Psoas muscle (tissue), 8 donors: ENCODE measurements at regions of chr17 and their contacts with region 1.

Region 1: DNA sequence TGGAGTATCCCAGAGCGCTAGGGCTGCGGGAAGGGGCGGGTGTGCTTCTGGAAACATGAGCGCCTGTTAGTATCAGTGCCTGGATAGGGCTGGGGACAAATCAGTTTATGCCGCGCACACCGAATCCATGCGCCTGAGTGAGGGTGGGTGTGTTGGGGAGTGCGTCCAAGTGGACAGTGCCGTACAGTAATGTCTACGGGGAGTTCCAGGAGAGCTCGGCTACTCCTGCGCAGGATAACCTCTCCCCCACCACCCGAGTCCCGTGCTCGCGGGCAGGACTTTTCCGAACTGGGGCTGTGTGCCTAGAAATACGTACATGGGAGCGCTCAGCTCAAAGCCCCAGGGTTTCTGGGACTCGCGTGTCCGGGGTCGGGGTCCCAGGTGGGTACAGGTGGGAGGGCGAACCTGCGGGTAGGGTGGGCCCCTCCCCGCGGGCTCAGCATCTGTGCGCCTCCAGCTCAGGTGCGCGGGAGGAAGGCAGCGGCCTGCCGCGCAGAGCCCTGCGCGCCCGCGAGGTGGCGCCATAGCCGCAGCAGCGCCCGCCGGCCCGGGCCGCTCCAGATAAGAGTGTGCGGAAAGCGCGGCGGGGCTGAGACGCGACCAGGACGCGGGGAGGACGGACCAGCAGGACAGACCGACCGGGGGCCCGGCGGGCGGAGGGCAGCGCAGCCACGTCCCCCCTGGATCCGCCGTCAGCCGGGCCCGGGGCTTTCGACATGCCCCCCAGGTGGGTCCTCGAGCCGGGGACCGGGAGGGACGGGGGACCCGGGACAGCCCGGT is at the start of gene HIC1:
- DNase-seq: peak; percentile 81 to 90
- ATAC-seq: peak; percentile 72 to 83 (median 78)
- H3K4me3 ChIP-seq: peak within 1 kb of the TSS; percentile 74
- H3K27ac ChIP-seq: peak within 1 kb of the TSS; percentile 62
- H3K4me1 ChIP-seq: peaks cover 6% of the 10 kb centered on the region
- H3K27me3 ChIP-seq: peaks cover 0 to 13% (median 2%) of the 10 kb centered on the region in 3 donors
- CTCF ChIP-seq: peak; percentile 97
- total RNA-seq, gene HIC1: 4.3 to 12.6 (median 9.4) TPM

Region 2: GRCh38 chr17:2172077-2172851 is 117.6 kb after region 1 on chr17:
- intact Hi-C with region 1: no loop called
- DNase-seq: peak; percentile 65 to 78
- ATAC-seq: peak; percentile 64 to 80 (median 76)
- H3K4me3 ChIP-seq: peak overlapping the region; percentile 37
- H3K27ac ChIP-seq: peak overlapping the region; percentile 84
- H3K4me1 ChIP-seq: peaks cover 64% of the 10 kb centered on the region
- H3K27me3 ChIP-seq: no peaks in the 10 kb centered on the region
- CTCF ChIP-seq: no peak

Region 3: GRCh38 chr17:2244545-2245525 is 190.1 kb after region 1 on chr17:
- intact Hi-C with region 1: loop called (anchors 1 to 2 kb)
- DNase-seq: peak; percentile 89 to 95
- ATAC-seq: peak; percentile 91 to 95 (median 94)
- H3K4me3 ChIP-seq: no peak overlapping the region
- H3K27ac ChIP-seq: peak overlapping the region; percentile 71
- H3K4me1 ChIP-seq: peaks cover 8% of the 10 kb centered on the region
- H3K27me3 ChIP-seq: no peaks in the 10 kb centered on the region
- CTCF ChIP-seq: peak; percentile 99

Region 4: DNA sequence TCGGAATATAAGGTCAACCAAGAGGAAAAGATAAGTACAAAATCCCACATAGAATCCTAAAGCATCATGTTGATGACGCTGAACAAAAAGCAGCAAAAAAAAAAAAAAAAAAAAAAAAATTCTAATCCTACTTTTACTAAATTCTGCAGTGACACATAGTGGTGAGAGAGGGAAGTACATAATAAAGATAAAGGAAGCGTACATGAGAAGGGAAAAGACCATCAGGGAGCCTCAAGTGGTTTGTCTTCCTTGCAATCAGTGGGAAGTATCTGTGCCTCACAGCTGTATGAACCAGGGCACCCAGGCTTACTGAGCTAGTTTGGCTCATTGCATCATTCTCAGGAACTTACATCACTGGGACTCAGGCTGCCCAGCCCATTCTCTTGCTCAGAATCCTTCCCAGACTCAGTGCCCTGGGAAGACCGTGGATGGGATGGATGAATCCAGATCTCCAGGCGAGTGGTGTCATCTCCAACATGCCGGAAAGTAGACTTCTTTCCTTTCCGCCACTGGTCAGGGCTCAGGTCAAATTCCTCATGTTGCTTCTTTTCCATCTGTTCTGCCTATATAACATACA is 227.7 kb after region 1 on chr17:
- intact Hi-C with region 1: loop called in 1 of 2 experiments (anchors 2 kb)
- DNase-seq: peak in 1 of 2 donors; percentile 59
- ATAC-seq: peak; percentile 34 to 70 (median 66)
- H3K4me3 ChIP-seq: no peak overlapping the region
- H3K27ac ChIP-seq: no peak overlapping the region
- H3K4me1 ChIP-seq: no peaks in the 10 kb centered on the region
- H3K27me3 ChIP-seq: no peaks in the 10 kb centered on the region
- CTCF ChIP-seq: peak; percentile 55

Region 5: DNA sequence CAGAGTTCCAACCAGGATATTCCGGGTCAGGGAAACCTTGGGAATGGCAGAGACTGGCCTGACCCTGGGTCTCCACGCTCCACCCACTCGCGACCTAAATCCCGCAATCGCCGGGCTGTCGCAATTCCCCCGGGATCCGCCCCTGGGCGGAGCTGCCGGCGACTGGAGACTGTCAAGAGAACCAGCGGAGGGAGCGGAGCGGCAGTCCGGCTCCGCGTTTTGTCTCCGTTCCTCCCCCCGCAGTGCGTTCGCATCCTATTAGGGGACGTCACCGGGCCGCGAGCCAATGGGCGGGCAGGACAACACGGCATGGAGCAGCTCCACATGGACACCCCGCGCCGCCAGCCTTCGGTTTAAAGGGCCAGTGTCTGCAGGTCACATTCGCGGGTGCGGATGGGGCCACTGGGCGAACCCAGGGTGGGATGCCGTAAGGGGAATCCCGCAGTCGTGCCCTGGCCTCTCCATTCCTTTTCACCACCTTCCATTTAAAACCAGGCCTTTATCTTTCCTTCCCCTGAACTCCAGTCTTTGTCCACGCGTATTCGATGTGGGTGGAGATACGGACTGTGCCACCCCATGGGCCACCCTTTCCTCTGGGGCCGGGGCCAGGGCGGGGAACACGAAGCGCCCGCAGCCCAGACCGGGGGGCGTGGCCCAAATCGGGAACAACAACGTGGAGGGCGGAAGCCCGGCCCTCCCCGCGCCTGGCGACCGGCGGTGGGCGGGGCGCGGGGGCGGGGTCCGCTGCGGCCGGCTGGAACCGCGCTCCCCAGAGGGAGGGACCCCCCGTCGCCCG is 346.9 kb after region 1 on chr17:
- intact Hi-C with region 1: no loop called
- DNase-seq: peak; percentile 100
- ATAC-seq: peak; percentile 67 to 71 (median 68)
- H3K4me3 ChIP-seq: peak overlapping the region; percentile 98
- H3K27ac ChIP-seq: peak overlapping the region; percentile 100
- H3K4me1 ChIP-seq: peaks cover 58% of the 10 kb centered on the region
- H3K27me3 ChIP-seq: no peaks in the 10 kb centered on the region
- CTCF ChIP-seq: no peak